Caco-2 (cell line): ENCODE measurements at regions of chr10 and their contacts with region 1.

Region 1: DNA sequence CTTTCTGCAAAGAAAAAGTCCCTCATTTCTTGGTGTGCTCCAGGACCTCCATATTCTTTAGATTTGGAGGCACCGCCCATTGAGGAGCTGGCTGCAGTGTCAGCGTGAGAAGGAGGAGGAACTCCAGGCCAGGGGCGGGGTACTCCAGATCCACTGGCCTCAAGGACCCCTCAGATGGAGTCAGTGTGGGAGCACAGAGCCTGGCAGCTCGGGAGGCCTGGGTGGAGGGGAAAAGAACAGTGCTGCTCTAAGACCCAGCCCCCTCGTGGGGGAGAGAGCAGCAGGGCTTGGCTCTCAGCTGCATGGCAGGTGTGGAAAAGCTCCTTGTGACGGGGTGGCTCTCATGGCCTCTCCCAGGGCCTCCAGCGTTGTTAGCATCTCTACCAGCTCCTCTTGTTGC is 70.5 kb downstream of the ITGB1 start:
- DNase-seq: no peak
- H3K4me3 ChIP-seq: no peak overlapping the region
- H3K4me3 Mint-ChIP-seq: no peak overlapping the region
- H3K27ac Mint-ChIP-seq: no peak overlapping the region
- H3K4me1 ChIP-seq: peaks cover 2% of the 10 kb centered on the region; the same call in 1 of the 2 replicates
- H3K4me1 Mint-ChIP-seq: no peaks in the 10 kb centered on the region
- H3K27me3 ChIP-seq: no peaks in the 10 kb centered on the region
- H3K27me3 Mint-ChIP-seq: no peaks in the 10 kb centered on the region
- CTCF ChIP-seq: no peak

Region 2: GRCh38 chr10:32865170-32865569 is 22.3 kb before region 1 on chr10:
- CTCF ChIA-PET with region 1: no interaction called
- POLR2A ChIA-PET with region 1: no interaction called
- intact Hi-C with region 1: loop called (anchors 2 kb)
- DNase-seq: no peak
- H3K4me3 ChIP-seq: no peak overlapping the region
- H3K4me3 Mint-ChIP-seq: no peak overlapping the region
- H3K27ac Mint-ChIP-seq: no peak overlapping the region
- H3K4me1 ChIP-seq: no peaks in the 10 kb centered on the region
- H3K4me1 Mint-ChIP-seq: no peaks in the 10 kb centered on the region
- H3K27me3 ChIP-seq: no peaks in the 10 kb centered on the region
- H3K27me3 Mint-ChIP-seq: peaks cover 9% of the 10 kb centered on the region
- CTCF ChIP-seq: no peak

Region 3: GRCh38 chr10:33055625-33056024 is 168.1 kb after region 1 on chr10:
- CTCF ChIA-PET with region 1: no interaction called
- POLR2A ChIA-PET with region 1: no interaction called
- intact Hi-C with region 1: no loop called
- DNase-seq: no peak
- H3K4me3 ChIP-seq: no peak overlapping the region
- H3K4me3 Mint-ChIP-seq: no peak overlapping the region
- H3K27ac Mint-ChIP-seq: no peak overlapping the region
- H3K4me1 ChIP-seq: no peaks in the 10 kb centered on the region
- H3K4me1 Mint-ChIP-seq: no peaks in the 10 kb centered on the region
- H3K27me3 ChIP-seq: no peaks in the 10 kb centered on the region
- H3K27me3 Mint-ChIP-seq: no peaks in the 10 kb centered on the region
- CTCF ChIP-seq: no peak

Region 4: DNA sequence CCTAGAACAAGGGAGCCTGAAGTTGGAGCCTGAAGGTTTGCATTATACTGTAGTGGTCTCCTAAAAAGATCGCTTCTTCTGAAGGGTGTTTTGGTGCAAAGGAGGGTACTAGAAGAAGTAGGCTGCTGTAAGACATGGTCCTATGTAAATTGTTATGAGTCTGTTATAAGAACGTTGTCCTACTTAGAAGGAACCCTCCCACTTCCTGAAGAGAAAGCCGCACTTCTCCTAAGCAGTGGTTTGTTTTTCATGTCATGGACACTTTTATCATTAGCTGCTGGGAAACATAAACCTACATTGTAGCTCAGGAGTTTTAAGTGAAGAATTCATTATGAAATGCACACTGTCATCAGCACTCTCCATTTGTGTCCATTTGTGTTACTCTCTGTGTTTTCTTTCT is 199.7 kb after region 1 on chr10:
- CTCF ChIA-PET with region 1: no interaction called
- POLR2A ChIA-PET with region 1: no interaction called
- intact Hi-C with region 1: loop called (anchors 10 kb)
- DNase-seq: no peak
- H3K4me3 ChIP-seq: no peak overlapping the region
- H3K4me3 Mint-ChIP-seq: no peak overlapping the region
- H3K27ac Mint-ChIP-seq: no peak overlapping the region
- H3K4me1 ChIP-seq: no peaks in the 10 kb centered on the region
- H3K4me1 Mint-ChIP-seq: no peaks in the 10 kb centered on the region
- H3K27me3 ChIP-seq: no peaks in the 10 kb centered on the region
- H3K27me3 Mint-ChIP-seq: peaks cover 5% of the 10 kb centered on the region
- CTCF ChIP-seq: no peak